Activated T-helper 1 cell treated with anti-CD3 and anti-CD28 coated beads, Interleukin-12 subunit alpha, Interleukin-12 subunit beta, Interleukin-2, Interleukin-4 antibody, amounts not matched to agents 30 ng/mL and 10 ng/mL and 1 ng/mL, durations not matched to agents 14 hours and 24 hours and 36 hours (primary cell): ENCODE measurements at regions of chr7 and their contacts with region 1.

Region 1: GRCh38 chr7:144835652-144836544 is at the start of gene TPK1:
- DNase-seq: peak; percentile 90
- H3K4me3 Mint-ChIP-seq: peak within 1 kb of the TSS; percentile 97
- H3K27ac Mint-ChIP-seq: peak within 1 kb of the TSS; percentile 100
- H3K4me1 Mint-ChIP-seq: peaks cover 45% of the 10 kb centered on the region
- H3K27me3 Mint-ChIP-seq: no peaks in the 10 kb centered on the region
- total RNA-seq, gene TPK1: 11.5 TPM in 2 replicates

Region 2: GRCh38 chr7:144786522-144786921 is 49.4 kb before region 1 on chr7:
- intact Hi-C with region 1: loop called (anchors 1 kb)
- DNase-seq: no peak
- H3K4me3 Mint-ChIP-seq: no peak overlapping the region
- H3K27ac Mint-ChIP-seq: no peak overlapping the region
- H3K4me1 Mint-ChIP-seq: no peaks in the 10 kb centered on the region
- H3K27me3 Mint-ChIP-seq: no peaks in the 10 kb centered on the region

Region 3: GRCh38 chr7:144818511-144818910 is 17.4 kb before region 1 on chr7:
- intact Hi-C with region 1: loop called (anchors 1 kb)
- DNase-seq: peak; percentile 49
- H3K4me3 Mint-ChIP-seq: peak overlapping the region; percentile 9
- H3K27ac Mint-ChIP-seq: peak overlapping the region; percentile 83
- H3K4me1 Mint-ChIP-seq: peaks cover 71% of the 10 kb centered on the region
- H3K27me3 Mint-ChIP-seq: no peaks in the 10 kb centered on the region